ENCODE measurements at regions of chr19 and their contacts with region 1.

Region 1: GRCh38 chr19:18488838-18489626 is 32.8 kb downstream of the ELL start:
- DNase-seq: no peak
- H3K4me3 ChIP-seq: no peak overlapping the region
- H3K27ac ChIP-seq: no peak overlapping the region
- H3K4me1 ChIP-seq: peaks cover 29% of the 10 kb centered on the region
- H3K27me3 ChIP-seq: no peaks in the 10 kb centered on the region
- CTCF ChIP-seq: peak; percentile 26 to 49

Region 2: GRCh38 chr19:18419195-18419698 is 69.8 kb before region 1 on chr19 and contains the start of gene SSBP4:
- CTCF ChIA-PET with region 1: no interaction called
- dilution Hi-C with region 1: loop called (anchors 5 kb)
- in situ Hi-C with region 1: no loop called
- intact Hi-C with region 1: no loop called
- DNase-seq: peak; percentile 68
- H3K4me3 ChIP-seq: peak within 1 kb of the TSS; percentile 59 to 69 (median 60)
- H3K27ac ChIP-seq: no peak within 1 kb of the TSS
- H3K4me1 ChIP-seq: peaks cover 27% of the 10 kb centered on the region
- H3K27me3 ChIP-seq: no peaks in the 10 kb centered on the region
- CTCF ChIP-seq: peak in 1 of 2 donors; percentile 31
- total RNA-seq, gene SSBP4: 34.0 to 41.0 TPM

Region 3: GRCh38 chr19:18756896-18757295 is 267.9 kb after region 1 on chr19:
- CTCF ChIA-PET with region 1: no interaction called
- dilution Hi-C with region 1: loop called (anchors 5 kb)
- in situ Hi-C with region 1: no loop called
- intact Hi-C with region 1: no loop called
- DNase-seq: peak; percentile 90
- H3K4me3 ChIP-seq: no peak overlapping the region
- H3K27ac ChIP-seq: peak overlapping the region; percentile 66
- H3K4me1 ChIP-seq: peaks cover 21% of the 10 kb centered on the region
- H3K27me3 ChIP-seq: no peaks in the 10 kb centered on the region
- CTCF ChIP-seq: peak in 1 of 2 donors; percentile 23